Activated CD8-positive, alpha-beta T cell treated with anti-CD3 and anti-CD28 coated beads for 36 hours (primary cell): ENCODE measurements at regions of chr19 and their contacts with region 1.

Region 1: GRCh38 chr19:54352041-54352440 is 12.7 kb downstream of the LAIR1 start:
- DNase-seq: no peak
- ATAC-seq: peak; percentile 13
- H3K4me3 Mint-ChIP-seq: no peak overlapping the region
- H3K27ac Mint-ChIP-seq: no peak overlapping the region
- H3K4me1 Mint-ChIP-seq: peaks cover 4% of the 10 kb centered on the region
- H3K27me3 Mint-ChIP-seq: no peaks in the 10 kb centered on the region
- CTCF ChIP-seq: no peak

Region 2: GRCh38 chr19:54325194-54325621 is 26.8 kb before region 1 on chr19:
- CTCF ChIA-PET with region 1: interaction called, 12 read pairs
- POLR2A ChIA-PET with region 1: no interaction called
- intact Hi-C with region 1: no loop called
- DNase-seq: peak; percentile 60
- ATAC-seq: peak; percentile 79
- H3K4me3 Mint-ChIP-seq: no peak overlapping the region
- H3K27ac Mint-ChIP-seq: no peak overlapping the region
- H3K4me1 Mint-ChIP-seq: peaks cover 16% of the 10 kb centered on the region
- H3K27me3 Mint-ChIP-seq: peaks cover 12% of the 10 kb centered on the region
- CTCF ChIP-seq: peak; percentile 97